Activated CD4-positive, alpha-beta memory T cell treated with anti-CD3 and anti-CD28 coated beads, Interleukin-2, amount 10 ng/mL, durations not matched to agents 7 days and 5 days (primary cell): ENCODE measurements at regions of chr9 and their contacts with region 1.

Region 1: GRCh38 chr9:5510360-5510931 is at the start of gene PDCD1LG2:
- DNase-seq: peak; percentile 59
- H3K4me3 Mint-ChIP-seq: peak within 1 kb of the TSS; percentile 80
- H3K27ac Mint-ChIP-seq: peak within 1 kb of the TSS; percentile 95
- H3K4me1 Mint-ChIP-seq: peaks cover 60% of the 10 kb centered on the region
- H3K27me3 Mint-ChIP-seq: no peaks in the 10 kb centered on the region
- total RNA-seq, gene PDCD1LG2: 4.1 to 4.8 TPM

Region 2: DNA sequence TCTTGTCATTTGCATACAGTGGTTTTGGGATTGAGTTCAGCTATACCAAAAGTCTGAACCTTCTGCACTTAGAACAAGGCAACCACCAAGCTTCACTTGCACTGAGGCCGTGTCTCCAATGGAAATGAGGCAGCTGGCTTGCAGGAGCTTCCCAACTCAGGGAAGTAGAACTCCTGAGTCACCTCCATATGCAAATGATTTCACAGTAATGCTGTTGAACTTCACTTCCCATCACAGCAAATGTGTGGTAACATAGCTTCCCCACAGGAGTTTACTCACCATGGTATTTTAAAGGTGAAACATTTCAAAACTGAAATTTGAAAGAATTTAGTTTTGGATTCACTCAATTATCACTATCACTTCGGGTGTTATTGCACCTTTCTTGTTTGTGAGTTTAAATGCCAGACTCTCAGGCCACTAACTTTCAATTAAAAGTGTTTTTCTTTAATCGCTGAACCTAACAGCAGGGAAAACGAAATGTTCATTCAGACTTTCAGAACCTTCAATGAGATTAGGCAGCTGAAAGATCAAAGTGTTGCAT is 51.1 kb before region 1 on chr9:
- CTCF ChIA-PET with region 1: no interaction called
- POLR2A ChIA-PET with region 1: interaction called, 10 read pairs
- DNase-seq: no peak
- H3K4me3 Mint-ChIP-seq: peak overlapping the region; percentile 31
- H3K27ac Mint-ChIP-seq: peak overlapping the region; percentile 78
- H3K4me1 Mint-ChIP-seq: peaks cover 53% of the 10 kb centered on the region
- H3K27me3 Mint-ChIP-seq: no peaks in the 10 kb centered on the region

Region 3: GRCh38 chr9:5493679-5494511 is 16.6 kb before region 1 on chr9:
- CTCF ChIA-PET with region 1: interaction called, 6 read pairs
- POLR2A ChIA-PET with region 1: interaction called, 16 read pairs
- DNase-seq: peak; percentile 38
- H3K4me3 Mint-ChIP-seq: no peak overlapping the region
- H3K27ac Mint-ChIP-seq: peak overlapping the region; percentile 64
- H3K4me1 Mint-ChIP-seq: peaks cover 20% of the 10 kb centered on the region
- H3K27me3 Mint-ChIP-seq: no peaks in the 10 kb centered on the region

Region 4: DNA sequence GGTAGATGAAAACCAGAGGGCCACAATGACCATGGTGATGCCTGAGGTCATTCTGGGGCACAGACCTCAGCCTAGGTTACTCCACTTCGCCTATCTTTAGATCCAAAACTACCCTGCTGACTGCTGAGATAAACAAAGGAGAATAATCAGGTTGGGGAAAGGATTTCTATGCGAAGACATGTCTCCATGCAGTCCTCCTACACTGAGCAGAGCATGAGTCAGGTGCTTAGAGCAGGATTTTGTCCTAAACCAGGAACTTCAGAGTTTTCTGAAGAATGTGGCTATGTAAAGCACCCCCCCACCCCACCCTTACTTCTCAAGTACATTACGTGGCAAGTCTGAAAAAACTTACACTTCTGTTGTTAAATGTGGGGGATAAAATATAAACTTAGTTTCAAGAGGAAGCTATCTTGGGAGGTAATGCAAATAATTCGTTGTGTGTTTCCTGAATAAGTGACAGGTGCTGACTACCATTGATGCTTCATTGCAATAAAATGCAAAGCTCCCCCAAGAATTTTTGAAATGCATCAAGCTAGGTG is 19.3 kb after region 1 on chr9:
- CTCF ChIA-PET with region 1: interaction called, 3 read pairs
- POLR2A ChIA-PET with region 1: interaction called, 17 read pairs
- DNase-seq: no peak
- H3K4me3 Mint-ChIP-seq: no peak overlapping the region
- H3K27ac Mint-ChIP-seq: no peak overlapping the region
- H3K4me1 Mint-ChIP-seq: peaks cover 21% of the 10 kb centered on the region
- H3K27me3 Mint-ChIP-seq: no peaks in the 10 kb centered on the region

Region 5: DNA sequence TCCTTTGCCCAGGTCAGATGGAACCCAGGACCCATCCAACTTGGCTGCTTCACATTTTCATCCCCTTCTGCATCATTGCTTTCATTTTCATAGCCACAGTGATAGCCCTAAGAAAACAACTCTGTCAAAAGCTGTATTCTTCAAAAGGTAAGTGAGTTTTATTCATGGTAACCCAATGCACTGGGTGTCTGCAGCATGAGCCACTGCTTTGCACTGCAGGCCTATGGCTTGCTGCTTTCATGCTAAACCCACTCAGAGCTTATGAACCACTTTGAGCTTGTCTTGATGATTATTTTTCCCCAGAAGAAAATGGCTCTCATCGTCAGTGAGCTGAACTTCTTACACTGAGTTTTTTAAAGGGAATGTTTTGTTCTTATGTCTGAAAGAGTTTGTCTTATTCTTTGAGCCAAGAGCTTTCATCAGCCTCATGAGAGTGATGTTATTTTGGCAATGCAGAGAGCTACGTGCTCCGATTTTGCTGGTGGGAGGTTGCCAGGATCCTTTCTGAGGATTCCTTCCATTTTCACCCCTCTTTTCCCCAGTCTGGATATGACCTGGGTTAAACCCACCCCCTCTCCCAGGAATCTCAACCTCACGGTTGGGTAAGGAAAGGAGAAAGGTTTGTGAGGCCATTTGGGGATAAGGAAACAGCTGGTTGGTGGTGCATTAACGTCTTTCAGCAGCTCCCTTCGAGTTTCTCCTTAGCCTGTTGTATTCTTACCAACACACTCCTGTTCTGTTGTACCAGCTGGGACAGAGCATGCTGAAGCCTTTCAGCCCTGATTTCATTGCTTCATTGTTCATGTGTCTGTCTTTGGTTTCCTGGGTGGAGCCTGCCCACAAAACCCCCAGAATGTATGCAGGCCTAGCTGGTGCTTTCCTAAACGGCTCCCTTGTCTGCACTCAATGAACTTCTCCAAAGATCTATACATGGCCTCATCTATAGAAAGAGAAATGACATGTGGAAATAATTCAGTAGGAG is 47.5 kb after region 1 on chr9:
- CTCF ChIA-PET with region 1: interaction called, 3 read pairs
- POLR2A ChIA-PET with region 1: interaction called, 31 read pairs
- DNase-seq: peak; percentile 77
- H3K4me3 Mint-ChIP-seq: peak overlapping the region; percentile 12
- H3K27ac Mint-ChIP-seq: peak overlapping the region; percentile 78
- H3K4me1 Mint-ChIP-seq: peaks cover 41% of the 10 kb centered on the region
- H3K27me3 Mint-ChIP-seq: no peaks in the 10 kb centered on the region

Region 6: DNA sequence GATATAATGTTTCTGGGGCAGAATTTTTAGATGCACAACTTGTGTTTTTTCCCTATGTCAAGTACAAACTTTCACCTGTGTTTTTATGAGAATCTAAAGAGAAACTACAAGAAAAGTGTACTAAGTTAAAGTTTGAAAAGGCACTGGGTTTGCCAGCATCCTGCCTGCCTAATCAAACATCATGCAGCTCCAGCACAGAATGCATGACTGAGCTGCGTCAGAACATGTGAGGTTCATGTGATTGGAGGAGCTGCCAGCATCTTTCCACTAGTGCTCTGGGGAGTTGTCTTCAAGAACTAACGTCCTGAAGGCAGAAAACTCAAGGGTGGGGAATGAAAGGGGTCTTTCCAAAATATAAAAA is 72.4 kb after region 1 on chr9:
- CTCF ChIA-PET with region 1: interaction called, 3 read pairs
- POLR2A ChIA-PET with region 1: interaction called, 12 read pairs
- DNase-seq: peak; percentile 53
- H3K4me3 Mint-ChIP-seq: no peak overlapping the region
- H3K27ac Mint-ChIP-seq: no peak overlapping the region
- H3K4me1 Mint-ChIP-seq: peaks cover 65% of the 10 kb centered on the region
- H3K27me3 Mint-ChIP-seq: no peaks in the 10 kb centered on the region